ENCODE measurements at regions of chr17 and their contacts with region 1.

Region 1: DNA sequence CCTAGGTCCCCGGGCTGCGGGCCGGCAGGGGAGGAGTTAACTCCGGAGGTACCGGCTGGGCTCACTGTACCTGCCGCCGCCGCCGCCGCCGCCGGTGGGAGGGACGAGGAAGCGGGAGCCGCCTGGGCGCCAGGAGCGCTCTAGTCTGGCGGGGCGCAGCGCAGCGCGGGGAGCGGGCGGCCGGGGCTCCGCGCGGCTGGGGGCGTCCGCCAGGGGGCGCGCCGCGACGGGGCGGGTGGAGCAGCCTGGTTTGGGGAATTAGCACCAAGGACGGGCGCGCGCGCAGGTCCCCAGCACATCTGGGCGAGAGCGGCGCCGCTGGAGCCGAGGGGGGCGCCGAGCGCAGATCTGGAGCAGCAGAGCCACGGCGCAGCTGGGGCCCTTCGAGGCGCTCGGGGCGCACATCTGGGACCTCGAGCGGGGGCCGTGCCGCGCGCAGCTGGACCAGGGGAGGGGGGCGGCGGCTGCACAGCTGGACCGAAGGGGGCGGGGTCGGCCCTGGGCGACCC is at the start of gene NXPH3:
- DNase-seq: peak; percentile 67 to 91
- H3K4me3 ChIP-seq: peak within 1 kb of the TSS; percentile 82 to 91
- H3K27ac ChIP-seq: peak within 1 kb of the TSS; percentile 93 to 97
- H3K4me1 ChIP-seq: peaks cover 0 to 72% (median 52%) of the 10 kb centered on the region in 4 donors
- H3K27me3 ChIP-seq: no peaks in the 10 kb centered on the region
- CTCF ChIP-seq: peak; percentile 48 to 96

Region 2: DNA sequence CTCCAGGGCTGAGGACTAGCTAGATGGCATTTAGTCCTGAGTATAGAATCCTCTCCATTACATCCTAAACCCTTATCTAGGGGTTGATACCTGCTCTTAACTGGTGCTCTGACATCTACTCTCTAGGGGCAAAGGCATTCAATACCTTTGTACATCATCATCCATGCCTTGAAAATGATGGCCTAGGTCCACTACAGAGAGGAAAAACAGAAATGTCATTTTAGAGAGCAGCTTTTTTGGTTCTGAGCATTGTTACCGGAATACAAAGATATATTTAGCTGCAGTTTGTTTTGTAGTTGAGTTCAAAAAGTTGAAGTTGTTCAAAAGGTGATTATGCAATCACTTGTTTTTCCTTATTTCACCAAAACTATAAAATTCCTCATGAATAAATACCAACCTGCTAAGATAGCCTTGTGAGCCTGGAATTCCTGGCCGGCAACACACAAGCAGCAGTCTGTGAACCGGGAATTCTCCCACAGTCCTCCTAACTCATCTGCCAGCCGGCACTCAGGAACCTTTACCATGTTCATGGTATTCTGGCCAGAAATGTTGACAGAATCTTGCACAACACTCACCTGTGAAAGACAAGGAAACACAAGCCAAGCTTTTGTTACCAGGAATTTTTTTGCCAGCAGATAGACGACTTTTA is 35.4 kb after region 1 on chr17:
- intact Hi-C with region 1: loop called (anchors 5 kb)
- DNase-seq: no peak
- H3K4me3 ChIP-seq: no peak overlapping the region
- H3K27ac ChIP-seq: peak overlapping the region; percentile 65 to 86
- H3K4me1 ChIP-seq: peaks cover 0 to 67% (median 22%) of the 10 kb centered on the region in 4 donors
- H3K27me3 ChIP-seq: no peaks in the 10 kb centered on the region
- CTCF ChIP-seq: no peak

Region 3: GRCh38 chr17:49779739-49780231 is 204.2 kb after region 1 on chr17:
- intact Hi-C with region 1: loop called (anchors 5 kb)
- DNase-seq: peak in 1 of 2 donors; percentile 49
- H3K4me3 ChIP-seq: no peak overlapping the region
- H3K27ac ChIP-seq: peak overlapping the region; percentile 77 to 78
- H3K4me1 ChIP-seq: peaks cover 0 to 83% (median 66%) of the 10 kb centered on the region in 4 donors
- H3K27me3 ChIP-seq: no peaks in the 10 kb centered on the region
- CTCF ChIP-seq: peak; percentile 56 to 62